PC-9 (cell line): ENCODE measurements at regions of chr5 and their contacts with region 1.

Region 1: DNA sequence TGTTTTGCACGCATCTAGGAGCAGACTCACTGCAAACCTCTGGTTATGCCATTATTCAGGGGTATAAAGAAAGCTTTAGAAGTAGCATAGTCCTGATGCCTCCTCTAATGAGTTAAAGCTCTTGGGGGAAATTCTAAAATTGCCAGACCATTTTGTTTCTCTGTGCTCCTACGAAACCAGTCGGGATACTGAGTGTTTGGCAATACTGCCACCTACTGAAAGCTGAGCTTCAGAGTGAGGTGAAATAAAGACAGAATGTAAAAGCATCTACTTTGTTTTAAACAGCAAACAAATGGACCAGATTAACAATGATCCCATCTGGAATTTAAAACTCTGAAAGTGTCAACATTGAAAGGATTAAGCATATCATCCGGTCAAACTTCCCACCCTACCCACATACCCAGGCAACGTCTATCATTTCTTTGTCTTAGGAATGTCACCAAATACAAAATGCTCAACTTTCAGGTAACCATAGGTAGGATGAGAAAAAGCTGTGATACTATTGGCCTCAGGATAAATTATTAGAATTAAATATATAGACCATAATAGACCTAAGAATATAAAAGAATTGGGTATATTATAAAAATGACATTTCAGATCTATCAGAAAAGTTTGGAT is 77.8 kb upstream of the SHISAL2B start:
- DNase-seq: peak in 1 of 2 experiments; percentile 15
- H3K4me3 ChIP-seq: no peak overlapping the region
- H3K27ac ChIP-seq: no peak overlapping the region
- H3K4me1 ChIP-seq: no peaks in the 10 kb centered on the region
- H3K27me3 ChIP-seq: no peaks in the 10 kb centered on the region
- CTCF ChIP-seq: peak; percentile 81

Region 2: DNA sequence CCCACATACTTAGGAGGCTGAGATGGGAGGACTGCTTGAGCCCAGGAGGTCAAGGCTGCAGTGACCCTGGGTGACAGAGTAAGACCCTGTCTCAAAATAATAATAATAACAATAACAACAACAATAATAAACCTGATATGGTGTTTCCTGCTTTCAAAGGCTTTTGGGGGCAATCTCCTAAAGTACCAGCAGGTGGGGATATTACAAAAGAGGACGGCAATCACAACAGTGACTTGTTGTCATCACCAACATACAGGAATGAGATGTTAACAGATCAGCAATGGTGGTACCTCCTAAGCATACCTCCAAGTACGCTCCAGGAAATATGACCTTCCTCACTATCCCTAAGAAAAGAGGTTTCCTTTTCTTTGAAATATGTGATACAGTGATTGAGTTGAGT is 537.9 kb before region 1 on chr5:
- CTCF ChIA-PET with region 1: interaction called, 3 read pairs
- POLR2A ChIA-PET with region 1: no interaction called
- intact Hi-C with region 1: loop called (anchors 10 kb)
- DNase-seq: peak in 1 of 2 experiments; percentile 1
- H3K4me3 ChIP-seq: no peak overlapping the region
- H3K27ac ChIP-seq: no peak overlapping the region
- H3K4me1 ChIP-seq: no peaks in the 10 kb centered on the region
- H3K27me3 ChIP-seq: no peaks in the 10 kb centered on the region
- CTCF ChIP-seq: peak; percentile 62

Region 3: DNA sequence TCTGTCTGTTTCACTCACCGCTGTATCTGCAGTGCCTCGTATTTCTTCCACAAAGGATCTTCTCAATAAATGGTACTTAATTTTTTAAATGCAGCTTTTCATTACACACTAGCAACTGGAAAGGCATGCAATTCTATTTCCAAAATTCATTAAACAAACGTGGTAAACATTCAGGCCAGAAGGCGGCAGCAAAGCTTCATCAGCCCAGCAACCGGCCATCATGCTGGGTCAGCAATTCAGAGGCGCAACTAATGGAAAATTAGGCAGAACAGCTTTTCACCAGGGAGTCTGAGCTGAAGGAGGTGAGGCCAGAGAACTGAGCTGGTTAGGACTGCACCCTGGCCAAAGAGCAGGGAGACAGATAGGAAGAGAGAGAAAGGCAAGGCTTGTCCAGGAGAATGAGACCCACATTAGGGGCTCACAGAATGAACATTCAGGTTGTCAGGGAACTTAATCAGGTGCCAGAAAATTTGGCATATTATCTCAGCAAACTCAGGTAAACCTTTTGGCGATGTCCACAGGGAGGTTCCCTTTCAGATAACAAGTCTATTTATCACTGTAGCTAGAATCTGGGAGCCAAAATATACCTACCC is 464.5 kb before region 1 on chr5:
- CTCF ChIA-PET with region 1: interaction called, 3 read pairs
- POLR2A ChIA-PET with region 1: no interaction called
- intact Hi-C with region 1: loop called (anchors 5 kb)
- DNase-seq: peak in 1 of 2 experiments; percentile 34
- H3K4me3 ChIP-seq: no peak overlapping the region
- H3K27ac ChIP-seq: no peak overlapping the region
- H3K4me1 ChIP-seq: no peaks in the 10 kb centered on the region
- H3K27me3 ChIP-seq: no peaks in the 10 kb centered on the region
- CTCF ChIP-seq: peak; percentile 76

Region 4: GRCh38 chr5:64229163-64229774 is 383.2 kb before region 1 on chr5:
- CTCF ChIA-PET with region 1: interaction called, 13 read pairs
- POLR2A ChIA-PET with region 1: no interaction called
- intact Hi-C with region 1: loop called (anchors 1 kb)
- DNase-seq: no peak
- H3K4me3 ChIP-seq: no peak overlapping the region
- H3K27ac ChIP-seq: no peak overlapping the region
- H3K4me1 ChIP-seq: no peaks in the 10 kb centered on the region
- H3K27me3 ChIP-seq: no peaks in the 10 kb centered on the region
- CTCF ChIP-seq: peak; percentile 81

Region 5: GRCh38 chr5:64384761-64385160 is 227.7 kb before region 1 on chr5:
- CTCF ChIA-PET with region 1: no interaction called
- POLR2A ChIA-PET with region 1: no interaction called
- intact Hi-C with region 1: loop called (anchors 2 kb)
- DNase-seq: peak in 1 of 2 experiments; percentile 0
- H3K4me3 ChIP-seq: no peak overlapping the region
- H3K27ac ChIP-seq: no peak overlapping the region
- H3K4me1 ChIP-seq: no peaks in the 10 kb centered on the region
- H3K27me3 ChIP-seq: no peaks in the 10 kb centered on the region
- CTCF ChIP-seq: peak; percentile 63

Region 6: GRCh38 chr5:64666078-64666477 is 53.6 kb after region 1 on chr5:
- CTCF ChIA-PET with region 1: no interaction called
- POLR2A ChIA-PET with region 1: no interaction called
- intact Hi-C with region 1: no loop called
- DNase-seq: no peak
- H3K4me3 ChIP-seq: no peak overlapping the region
- H3K27ac ChIP-seq: no peak overlapping the region
- H3K4me1 ChIP-seq: no peaks in the 10 kb centered on the region
- H3K27me3 ChIP-seq: no peaks in the 10 kb centered on the region
- CTCF ChIP-seq: no peak